PC-9 (cell line): ENCODE measurements at regions of chr3 and their contacts with region 1.

Region 1: GRCh38 chr3:128547368-128547987 is 54.5 kb upstream of the GATA2 start:
- DNase-seq: no peak
- H3K4me3 ChIP-seq: no peak overlapping the region
- H3K27ac ChIP-seq: no peak overlapping the region
- H3K4me1 ChIP-seq: 0 out of 2 replicates have a peak, but pooled peaks cover 6% of the 10 kb centered on the region
- H3K27me3 ChIP-seq: no peaks in the 10 kb centered on the region
- CTCF ChIP-seq: no peak

Region 2: DNA sequence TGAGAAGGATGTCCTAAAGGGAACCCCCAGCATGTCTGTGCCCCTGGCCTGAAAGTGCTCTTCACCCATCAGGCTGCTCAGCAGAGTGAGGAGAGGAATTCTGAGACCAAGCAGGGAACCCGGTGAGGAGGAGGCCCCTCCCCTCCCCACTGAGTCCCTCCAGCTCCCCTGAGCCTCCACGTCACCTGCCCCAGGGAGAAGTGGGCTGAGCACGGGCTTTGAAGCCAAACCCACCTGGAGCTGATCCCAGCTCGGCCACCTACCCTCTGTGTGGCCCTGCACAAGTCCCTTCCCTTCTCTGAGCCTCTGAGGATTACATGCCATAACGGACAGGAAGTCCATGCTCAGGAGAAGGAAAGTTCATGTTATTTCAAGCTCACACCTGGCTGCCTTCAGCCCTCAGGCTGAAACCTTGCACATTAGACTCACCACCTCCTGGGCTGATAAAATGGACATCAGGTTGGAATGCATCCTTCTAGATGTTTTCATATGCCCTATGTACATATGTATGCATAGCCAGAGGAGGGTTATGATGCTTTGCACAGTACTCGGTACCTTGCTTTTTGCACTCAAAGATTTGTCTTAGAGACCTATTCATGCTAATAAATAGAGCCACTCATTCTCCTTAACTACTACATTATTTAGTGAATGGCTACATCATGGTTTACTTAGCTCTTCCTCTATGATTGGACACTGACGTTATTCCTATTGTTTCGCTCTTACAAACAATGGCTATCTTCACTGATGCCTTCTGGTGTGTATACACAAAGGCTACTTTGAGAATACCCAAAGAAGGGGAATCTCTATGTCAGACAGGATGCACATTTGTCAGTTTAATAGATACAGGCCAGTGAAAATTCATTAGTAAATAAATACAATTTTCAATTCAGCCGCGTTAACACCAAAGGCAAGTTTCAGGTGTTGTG is 22.8 kb before region 1 on chr3:
- CTCF ChIA-PET with region 1: no interaction called
- POLR2A ChIA-PET with region 1: interaction called, 14 read pairs
- intact Hi-C with region 1: no loop called
- DNase-seq: no peak
- H3K4me3 ChIP-seq: no peak overlapping the region
- H3K27ac ChIP-seq: no peak overlapping the region
- H3K4me1 ChIP-seq: no peaks in the 10 kb centered on the region
- H3K27me3 ChIP-seq: peaks cover 38% of the 10 kb centered on the region
- CTCF ChIP-seq: no peak